ENCODE measurements at regions of chr5 and their contacts with region 1.

Region 1: DNA sequence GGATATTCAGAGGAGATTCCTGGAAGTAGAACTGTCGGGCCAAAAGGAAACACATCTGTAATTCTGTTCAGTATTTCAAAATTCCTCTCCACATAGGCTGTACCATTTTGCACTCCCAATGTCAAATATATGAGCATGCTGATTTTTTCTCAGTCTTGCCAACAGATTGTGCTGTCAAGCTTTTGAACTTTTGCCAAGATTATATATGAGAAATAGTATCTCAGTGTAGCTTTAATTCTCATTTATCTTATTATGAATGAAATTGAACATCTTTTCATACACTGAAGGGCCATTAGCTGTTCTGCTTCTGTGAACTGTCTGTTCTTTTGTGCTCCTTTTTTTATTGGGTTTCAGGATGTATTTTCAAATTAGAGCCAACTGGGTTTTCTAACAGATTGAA is 907.1 kb downstream of the MAT2B start:
- DNase-seq: no peak
- ATAC-seq: no peak
- H3K4me3 ChIP-seq: no peak overlapping the region
- H3K27ac ChIP-seq: no peak overlapping the region
- H3K4me1 ChIP-seq: no peaks in the 10 kb centered on the region
- H3K27me3 ChIP-seq: no peaks in the 10 kb centered on the region
- CTCF ChIP-seq: no peak
- EP300 ChIP-seq: no peak
- POLR2A ChIP-seq: no peak
- RAD21 ChIP-seq: no peak

Region 2: DNA sequence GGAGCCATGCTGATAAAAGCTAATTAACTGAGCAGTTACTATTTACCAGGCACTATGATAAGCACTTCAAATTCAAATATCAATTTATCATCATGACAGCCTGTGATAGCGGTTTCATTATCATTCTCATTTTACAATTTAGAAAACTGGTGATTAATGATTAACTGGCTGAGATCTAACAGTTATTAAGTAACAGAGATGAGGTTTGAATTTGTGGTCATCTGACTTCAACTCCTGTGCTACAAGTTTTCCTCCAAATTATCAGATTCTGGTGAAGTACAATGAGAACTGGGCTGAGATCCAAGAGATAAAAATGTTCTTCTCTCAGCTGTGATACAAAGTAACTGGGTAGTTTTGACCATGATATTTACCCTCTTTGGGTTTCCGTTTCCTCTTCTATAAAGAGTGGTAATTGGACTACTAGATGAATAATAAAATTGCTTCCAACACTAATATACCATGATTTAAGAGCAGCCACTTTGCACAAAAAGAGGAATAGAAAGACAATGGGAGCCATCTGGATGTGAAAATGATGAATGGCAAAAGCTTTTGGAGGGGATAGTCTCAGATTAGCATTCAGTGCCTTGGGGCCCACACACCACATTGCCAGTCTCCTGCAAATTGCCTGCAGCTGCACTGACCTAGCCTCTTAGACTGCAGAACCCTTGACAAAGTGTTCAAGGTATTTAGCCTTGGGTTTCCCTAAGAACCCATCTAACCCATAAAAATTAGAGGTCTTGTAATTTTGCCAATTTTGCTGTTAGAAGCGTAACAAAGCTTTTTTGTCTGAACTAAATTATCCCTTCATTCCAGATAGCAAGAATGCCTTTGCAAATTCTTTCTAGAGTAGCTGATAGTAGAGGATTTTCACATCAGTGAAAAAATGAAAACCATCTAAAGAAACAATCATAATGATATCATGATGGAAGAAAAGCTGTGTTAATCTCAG is 1049.4 kb before region 1 on chr5:
- CTCF ChIA-PET with region 1: no interaction called
- POLR2A ChIA-PET with region 1: no interaction called
- RAD21 ChIA-PET with region 1: no interaction called
- SMC1A ChIA-PET with region 1: no interaction called
- in situ Hi-C with region 1: no loop called
- intact Hi-C with region 1: no loop called
- DNase-seq: no peak
- ATAC-seq: peak; percentile 55
- H3K4me3 ChIP-seq: no peak overlapping the region
- H3K27ac ChIP-seq: no peak overlapping the region
- H3K4me1 ChIP-seq: no peaks in the 10 kb centered on the region
- H3K27me3 ChIP-seq: no peaks in the 10 kb centered on the region
- CTCF ChIP-seq: no peak
- EP300 ChIP-seq: no peak
- POLR2A ChIP-seq: no peak
- RAD21 ChIP-seq: no peak

Region 3: DNA sequence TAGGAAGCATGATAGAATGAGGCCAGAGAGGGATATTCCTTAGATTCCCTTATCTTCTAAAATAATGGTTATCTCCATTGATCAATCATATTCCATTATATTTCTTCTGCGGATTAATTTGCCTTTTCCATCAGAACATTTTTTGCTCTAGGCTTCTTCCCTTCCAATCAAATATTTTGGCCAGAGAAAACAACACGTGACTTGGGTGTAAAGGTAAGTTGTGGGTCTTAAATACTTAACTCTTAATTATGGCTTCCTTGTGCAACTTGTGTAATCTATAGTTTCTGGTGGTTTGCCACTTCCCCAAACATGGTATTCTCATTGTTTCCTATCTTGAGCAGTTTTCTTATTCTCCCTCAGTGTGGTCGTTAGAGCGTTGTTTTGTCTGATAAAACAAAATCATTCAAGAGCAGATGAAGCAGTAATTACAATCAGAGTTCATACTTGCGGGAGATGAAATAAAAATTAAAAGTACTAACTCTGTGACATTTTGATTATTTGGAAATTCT is 17.8 kb before region 1 on chr5:
- CTCF ChIA-PET with region 1: interaction called, 4 read pairs
- POLR2A ChIA-PET with region 1: interaction called, 10 read pairs
- RAD21 ChIA-PET with region 1: no interaction called
- SMC1A ChIA-PET with region 1: interaction called, 8 read pairs
- in situ Hi-C with region 1: no loop called
- intact Hi-C with region 1: no loop called
- DNase-seq: no peak
- ATAC-seq: no peak
- H3K4me3 ChIP-seq: no peak overlapping the region
- H3K27ac ChIP-seq: no peak overlapping the region
- H3K4me1 ChIP-seq: no peaks in the 10 kb centered on the region
- H3K27me3 ChIP-seq: no peaks in the 10 kb centered on the region
- CTCF ChIP-seq: no peak
- EP300 ChIP-seq: no peak
- POLR2A ChIP-seq: no peak
- RAD21 ChIP-seq: no peak

Region 4: GRCh38 chr5:164487939-164488338 is 75.4 kb after region 1 on chr5:
- CTCF ChIA-PET with region 1: no interaction called
- POLR2A ChIA-PET with region 1: no interaction called
- RAD21 ChIA-PET with region 1: no interaction called
- SMC1A ChIA-PET with region 1: no interaction called
- in situ Hi-C with region 1: no loop called
- intact Hi-C with region 1: no loop called
- DNase-seq: no peak
- ATAC-seq: no peak
- H3K4me3 ChIP-seq: no peak overlapping the region
- H3K27ac ChIP-seq: no peak overlapping the region
- H3K4me1 ChIP-seq: no peaks in the 10 kb centered on the region
- H3K27me3 ChIP-seq: no peaks in the 10 kb centered on the region
- CTCF ChIP-seq: no peak
- EP300 ChIP-seq: no peak
- POLR2A ChIP-seq: no peak
- RAD21 ChIP-seq: no peak

Region 5: DNA sequence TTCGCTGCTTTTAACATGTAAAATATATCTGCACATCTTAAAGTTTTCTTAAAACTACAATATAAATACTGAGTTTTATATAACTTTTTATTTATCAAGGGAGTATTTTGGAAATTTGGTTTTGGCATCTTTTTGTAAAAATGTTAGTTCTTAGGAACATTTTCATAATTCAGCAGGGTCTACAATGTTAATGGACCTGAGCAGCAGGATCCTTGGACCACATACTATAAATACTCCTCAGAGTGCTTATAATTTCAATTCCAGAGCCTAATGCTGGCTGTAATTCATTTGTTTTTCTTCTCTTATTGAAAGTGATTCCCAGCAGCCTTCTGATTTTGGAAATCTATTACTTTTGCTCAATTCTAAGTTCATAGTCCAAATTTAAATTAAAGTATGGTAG is 309.1 kb after region 1 on chr5:
- CTCF ChIA-PET with region 1: no interaction called
- POLR2A ChIA-PET with region 1: no interaction called
- RAD21 ChIA-PET with region 1: no interaction called
- SMC1A ChIA-PET with region 1: no interaction called
- in situ Hi-C with region 1: no loop called
- intact Hi-C with region 1: no loop called
- DNase-seq: no peak
- ATAC-seq: no peak
- H3K4me3 ChIP-seq: no peak overlapping the region
- H3K27ac ChIP-seq: no peak overlapping the region
- H3K4me1 ChIP-seq: no peaks in the 10 kb centered on the region
- H3K27me3 ChIP-seq: no peaks in the 10 kb centered on the region
- CTCF ChIP-seq: no peak
- EP300 ChIP-seq: no peak
- POLR2A ChIP-seq: no peak
- RAD21 ChIP-seq: no peak